Dendritic cell treated with granulocyte-macrophage colony-stimulating factor and Interleukin-4, amounts not matched to agents 40 ng/mL and 50 ng/mL, for 4 days (primary cell): ENCODE measurements at regions of chr11 and their contacts with region 1.

Region 1: DNA sequence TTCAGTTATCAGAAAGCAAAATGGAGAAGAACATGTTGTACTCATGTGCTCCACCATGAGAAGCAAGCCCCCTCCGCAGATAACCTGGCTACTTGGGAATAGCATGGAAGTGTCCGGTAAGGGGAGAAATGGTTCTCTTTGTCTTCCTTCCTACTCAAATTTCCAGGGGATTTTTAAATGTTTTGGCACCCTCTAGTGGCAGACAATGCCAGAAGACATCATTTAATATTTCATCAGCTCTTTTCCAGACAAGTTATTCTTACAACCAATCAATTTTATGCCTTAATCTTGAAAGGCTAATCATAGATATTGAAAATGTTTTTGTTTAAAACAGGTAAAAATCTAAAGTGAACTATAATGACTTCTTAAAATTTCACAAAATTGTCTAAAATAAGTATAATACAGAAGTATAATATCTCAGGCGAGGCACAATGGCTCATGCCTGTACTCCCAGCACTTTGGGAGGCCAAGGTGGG is 15.7 kb downstream of the CRTAM start:
- H3K4me3 Mint-ChIP-seq: no peak overlapping the region
- H3K27ac Mint-ChIP-seq: no peak overlapping the region
- H3K4me1 Mint-ChIP-seq: peaks cover 50% of the 10 kb centered on the region
- H3K27me3 Mint-ChIP-seq: no peaks in the 10 kb centered on the region

Region 2: DNA sequence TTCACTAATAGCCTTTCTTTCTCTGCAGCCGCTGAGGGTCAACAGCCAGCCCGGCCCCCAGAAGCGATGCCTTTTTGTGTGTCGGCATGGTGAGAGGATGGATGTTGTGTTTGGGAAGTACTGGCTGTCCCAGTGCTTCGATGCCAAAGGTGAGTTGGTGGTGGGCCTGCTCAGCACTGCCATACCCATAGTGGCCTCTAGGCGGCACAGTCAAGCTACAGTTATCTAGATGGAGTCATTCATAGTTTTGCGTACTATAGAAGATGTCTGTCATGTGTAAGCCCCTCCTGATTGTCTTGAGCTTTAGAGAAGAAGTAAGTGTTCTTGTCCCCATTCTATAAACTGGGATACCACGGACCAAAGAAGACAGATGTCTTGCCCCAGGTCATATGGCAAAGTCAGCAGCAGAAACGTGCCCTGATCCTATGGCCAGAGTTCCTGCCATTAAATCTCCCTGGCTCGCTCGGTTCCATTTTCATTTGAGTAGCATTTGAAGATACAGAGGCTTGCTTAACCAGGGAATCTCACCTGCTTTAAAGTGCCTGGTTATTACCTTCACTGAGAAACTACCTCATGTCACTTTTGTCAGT is 57.8 kb before region 1 on chr11:
- intact Hi-C with region 1: loop called (anchors 1 kb)
- H3K4me3 Mint-ChIP-seq: no peak overlapping the region
- H3K27ac Mint-ChIP-seq: no peak overlapping the region
- H3K4me1 Mint-ChIP-seq: peaks cover 18% of the 10 kb centered on the region
- H3K27me3 Mint-ChIP-seq: no peaks in the 10 kb centered on the region